Activated naive CD4-positive, alpha-beta T cell treated with anti-CD3 and anti-CD28 coated beads for 36 hours (primary cell): ENCODE measurements at regions of chr11 and their contacts with region 1.

Region 1: DNA sequence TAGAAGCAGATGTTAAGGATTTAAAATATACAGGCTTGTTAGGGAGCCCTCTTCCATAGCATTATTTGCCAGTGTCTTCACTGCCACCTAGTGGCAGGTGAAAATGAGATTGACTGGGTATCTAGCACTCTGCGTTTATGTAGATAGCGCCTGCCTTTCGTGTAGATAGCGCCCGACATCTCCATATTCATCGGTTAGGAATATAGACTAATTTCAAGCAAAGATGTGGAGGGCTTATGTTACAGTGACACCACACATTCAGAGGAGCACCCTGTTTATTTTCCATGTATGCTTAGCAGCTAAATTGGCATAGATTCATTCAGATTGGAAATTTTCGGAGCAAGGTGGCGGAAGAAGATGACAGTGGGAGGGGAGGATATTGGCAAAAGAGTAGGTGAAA is 72.0 kb downstream of the SLC5A12 start:
- DNase-seq: peak; percentile 45
- H3K4me3 Mint-ChIP-seq: no peak overlapping the region
- H3K27ac Mint-ChIP-seq: no peak overlapping the region
- H3K4me1 Mint-ChIP-seq: no peaks in the 10 kb centered on the region
- H3K27me3 Mint-ChIP-seq: no peaks in the 10 kb centered on the region

Region 2: DNA sequence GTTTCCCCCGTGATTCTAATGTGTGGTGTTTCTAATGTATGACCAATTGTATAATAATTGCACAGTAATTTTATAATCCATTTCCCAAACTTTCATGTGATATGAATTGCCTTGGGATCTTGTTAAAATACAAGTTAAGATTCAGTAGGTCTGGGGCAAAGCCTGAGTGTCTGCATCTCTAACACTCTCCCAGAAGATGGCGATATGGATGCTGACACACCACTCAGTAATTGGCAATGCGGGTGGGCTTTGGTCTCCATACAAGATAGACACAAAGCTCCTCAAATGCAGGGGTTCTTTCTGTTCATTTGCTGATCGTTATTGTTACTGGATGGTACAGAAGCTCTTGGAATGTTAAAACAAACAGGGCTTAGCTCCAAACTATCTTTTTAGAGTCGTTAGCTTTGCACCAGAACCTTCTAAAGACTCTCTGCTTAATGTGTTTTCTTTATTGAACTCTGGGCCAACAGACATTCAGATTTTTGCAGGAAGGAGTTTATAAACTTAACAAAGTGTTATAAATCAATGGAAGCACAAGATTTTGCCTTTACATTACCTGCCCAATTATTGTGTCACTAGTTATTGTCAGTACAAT is 363.3 kb before region 1 on chr11:
- CTCF ChIA-PET with region 1: no interaction called
- intact Hi-C with region 1: loop called (anchors 2 kb)
- DNase-seq: no peak
- H3K4me3 Mint-ChIP-seq: no peak overlapping the region
- H3K27ac Mint-ChIP-seq: no peak overlapping the region
- H3K4me1 Mint-ChIP-seq: peaks cover 2% of the 10 kb centered on the region
- H3K27me3 Mint-ChIP-seq: peaks cover 12% of the 10 kb centered on the region